ENCODE measurements at regions of chr9 and their contacts with region 1.

Region 1: DNA sequence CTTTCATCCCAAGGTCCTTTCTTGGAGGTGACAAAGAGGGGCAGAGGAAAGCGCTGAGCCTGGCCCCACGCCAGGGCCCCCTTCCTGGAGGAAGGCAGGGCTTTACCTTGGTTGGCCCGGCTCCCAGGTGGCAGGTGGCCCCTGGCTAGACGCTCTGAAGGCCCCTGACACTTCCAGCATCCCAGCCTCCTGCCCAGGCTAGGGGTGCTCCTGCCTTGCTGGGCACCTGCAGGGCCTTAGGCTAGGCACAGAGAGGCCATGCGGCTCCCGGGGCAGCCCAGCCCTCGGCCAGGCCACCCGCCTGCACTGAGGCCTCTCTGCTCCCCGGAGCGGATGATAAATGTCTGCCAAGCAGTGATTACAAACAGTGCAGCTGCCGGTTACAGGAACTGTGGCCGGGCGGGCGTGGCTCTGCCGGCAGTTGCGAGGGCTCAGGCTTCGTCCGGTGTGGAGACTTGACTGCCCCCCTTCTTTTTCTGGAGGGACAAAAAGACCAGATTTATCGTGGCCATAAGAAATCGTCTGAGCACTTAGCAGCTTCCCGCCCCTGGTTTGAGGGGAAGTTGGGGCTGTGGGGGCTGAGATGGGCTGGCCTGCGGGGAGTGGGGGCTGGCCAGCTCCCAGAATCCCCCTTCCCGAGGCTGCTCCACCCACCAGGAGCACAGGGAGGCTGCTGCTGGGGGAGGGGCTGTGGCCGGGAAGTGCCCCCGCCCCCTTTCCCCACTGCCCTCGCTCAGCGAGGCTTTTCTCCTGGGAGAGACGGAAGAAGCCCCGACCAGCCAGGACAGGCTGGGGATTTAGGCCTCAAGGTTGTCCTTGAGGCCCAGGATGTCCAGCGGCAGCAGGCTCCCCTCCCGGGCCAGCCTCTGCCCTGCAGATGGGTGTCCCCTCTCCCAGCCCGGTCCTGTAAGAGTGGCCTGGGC is 31.6 kb upstream of the UBAC1 start:
- DNase-seq: peak in 7 of 9 experiments; percentile 28 to 75 (median 49)
- ATAC-seq: no peak
- H3K4me3 ChIP-seq: peak overlapping the region; percentile 33
- H3K4me3 Mint-ChIP-seq: peak overlapping the region; percentile 26
- H3K27ac ChIP-seq: peak overlapping the region in 1 of 2 experiments; percentile 54
- H3K27ac Mint-ChIP-seq: no peak overlapping the region
- H3K4me1 ChIP-seq: peaks cover 27% of the 10 kb centered on the region
- H3K4me1 Mint-ChIP-seq: peaks cover 11% of the 10 kb centered on the region
- H3K27me3 ChIP-seq: no peaks in the 10 kb centered on the region
- H3K27me3 Mint-ChIP-seq: no peaks in the 10 kb centered on the region
- CTCF ChIP-seq: no peak

Region 2: DNA sequence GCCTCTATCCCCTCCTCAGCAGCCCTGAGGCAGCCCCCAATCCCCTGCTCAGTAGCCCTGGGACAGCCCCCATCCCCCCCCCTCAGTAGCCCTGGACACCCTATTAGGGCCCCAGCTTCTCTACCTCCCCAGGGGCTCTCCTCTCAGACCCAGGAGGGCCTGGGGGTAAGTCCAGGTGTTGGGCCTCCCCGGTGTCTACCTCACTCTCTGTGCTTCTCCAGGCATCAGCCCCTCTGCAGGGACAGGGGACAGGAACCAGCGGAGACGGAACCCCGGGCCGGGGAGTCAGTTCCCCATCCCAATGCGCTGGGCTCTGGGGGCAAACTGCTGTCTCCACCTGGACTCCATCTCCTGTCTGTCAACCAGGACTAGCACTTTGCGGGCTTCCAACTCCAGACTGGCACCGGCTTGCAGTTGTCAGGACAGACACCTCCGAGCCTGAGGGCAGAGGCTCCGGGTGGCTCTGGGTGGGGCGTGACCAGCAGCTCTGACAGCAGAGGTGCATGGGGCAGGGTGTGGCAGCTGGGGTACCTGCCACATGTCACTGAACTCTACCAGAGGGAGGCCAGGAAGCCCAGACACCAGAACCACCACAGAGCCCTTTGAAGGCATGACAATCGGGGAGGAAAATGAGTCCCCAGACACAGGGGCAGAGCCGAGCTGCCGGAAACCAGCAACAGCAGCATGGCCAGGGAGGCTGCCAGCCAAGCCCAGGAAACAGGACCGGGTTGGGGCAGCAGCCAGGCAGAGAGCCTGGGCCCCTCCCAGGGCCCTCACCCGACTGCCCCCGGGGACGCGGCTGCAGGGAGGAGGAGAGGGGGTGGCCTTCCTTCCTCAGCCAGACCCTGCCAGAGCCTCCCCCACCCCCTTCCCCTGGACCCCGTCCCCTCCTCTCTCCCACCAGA is 13.9 kb before region 1 on chr9:
- CTCF ChIA-PET with region 1: no interaction called
- POLR2A ChIA-PET with region 1: no interaction called
- intact Hi-C with region 1: loop called in 1 of 2 experiments (anchors 2 kb)
- DNase-seq: peak; percentile 46 to 83 (median 68)
- ATAC-seq: peak; percentile 94
- H3K4me3 ChIP-seq: peak overlapping the region in 1 of 2 experiments; percentile 14
- H3K4me3 Mint-ChIP-seq: peak overlapping the region; percentile 67
- H3K27ac ChIP-seq: no peak overlapping the region
- H3K27ac Mint-ChIP-seq: no peak overlapping the region
- H3K4me1 ChIP-seq: peaks cover 25% of the 10 kb centered on the region
- H3K4me1 Mint-ChIP-seq: peaks cover 14% of the 10 kb centered on the region
- H3K27me3 ChIP-seq: peaks cover 0 to 2% of the 10 kb centered on the region in 2 experiments
- H3K27me3 Mint-ChIP-seq: no peaks in the 10 kb centered on the region
- CTCF ChIP-seq: no peak

Region 3: GRCh38 chr9:136109351-136110081 is 116.8 kb after region 1 on chr9:
- CTCF ChIA-PET with region 1: no interaction called
- POLR2A ChIA-PET with region 1: no interaction called
- intact Hi-C with region 1: loop called in 1 of 2 experiments (anchors 5 kb)
- DNase-seq: peak; percentile 77 to 95 (median 92)
- ATAC-seq: peak; percentile 91
- H3K4me3 ChIP-seq: peak overlapping the region; percentile 58 to 65
- H3K4me3 Mint-ChIP-seq: peak overlapping the region; percentile 83
- H3K27ac ChIP-seq: peak overlapping the region; percentile 28 to 84
- H3K27ac Mint-ChIP-seq: peak overlapping the region; percentile 84
- H3K4me1 ChIP-seq: peaks cover 93% of the 10 kb centered on the region
- H3K4me1 Mint-ChIP-seq: peaks cover 73% of the 10 kb centered on the region
- H3K27me3 ChIP-seq: no peaks in the 10 kb centered on the region
- H3K27me3 Mint-ChIP-seq: no peaks in the 10 kb centered on the region
- CTCF ChIP-seq: no peak

Region 4: DNA sequence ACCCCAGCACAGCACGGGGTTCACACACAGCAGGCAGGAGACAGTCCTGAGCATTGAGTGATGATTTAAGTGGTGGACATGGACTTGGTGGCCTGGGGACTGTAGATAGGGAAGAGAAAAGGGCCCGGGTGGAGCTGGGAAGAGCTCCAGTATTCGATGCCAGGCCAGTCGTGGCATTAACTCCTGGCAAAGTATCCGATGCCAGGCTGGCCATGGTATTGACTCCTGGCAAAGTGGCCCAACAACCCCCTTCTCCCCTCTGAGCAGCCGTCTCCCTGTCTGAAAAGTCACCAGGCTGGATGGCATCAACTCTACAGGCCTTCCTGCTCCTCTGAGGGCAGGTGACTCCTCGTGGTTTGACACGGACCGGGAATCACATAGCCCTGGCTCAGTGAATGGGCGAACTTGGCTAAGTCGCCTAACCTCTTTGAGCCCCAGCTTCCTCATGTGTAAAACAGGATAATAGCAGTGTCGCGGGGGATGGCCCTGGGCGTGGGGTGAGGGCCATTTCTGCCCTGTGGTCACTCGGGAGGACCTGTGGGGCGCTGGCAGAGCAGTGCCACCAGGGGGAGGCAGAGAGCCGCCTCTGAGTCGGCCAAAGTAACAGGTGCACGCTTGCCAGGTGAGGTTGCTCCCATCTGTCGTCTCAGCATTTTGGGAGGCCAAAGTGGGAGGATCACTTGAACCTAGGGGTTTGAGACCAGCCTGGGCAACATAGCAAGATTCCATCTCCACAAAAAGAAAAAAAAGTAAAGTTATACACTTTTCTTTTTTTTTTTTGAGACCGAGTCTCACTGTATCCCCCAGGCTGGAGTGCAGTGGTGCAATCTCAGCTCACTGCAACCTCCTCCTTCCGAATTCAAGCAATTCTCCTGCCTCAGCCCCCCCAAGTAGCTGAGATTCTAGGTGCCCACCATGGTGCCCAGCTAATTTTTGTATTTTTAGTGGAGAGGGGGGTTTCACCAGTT is 495.8 kb after region 1 on chr9:
- CTCF ChIA-PET with region 1: no interaction called
- POLR2A ChIA-PET with region 1: no interaction called
- intact Hi-C with region 1: no loop called
- DNase-seq: peak; percentile 61 to 87 (median 78)
- ATAC-seq: peak; percentile 58
- H3K4me3 ChIP-seq: no peak overlapping the region
- H3K4me3 Mint-ChIP-seq: no peak overlapping the region
- H3K27ac ChIP-seq: no peak overlapping the region
- H3K27ac Mint-ChIP-seq: no peak overlapping the region
- H3K4me1 ChIP-seq: peaks cover 10% of the 10 kb centered on the region
- H3K4me1 Mint-ChIP-seq: peaks cover 6% of the 10 kb centered on the region
- H3K27me3 ChIP-seq: no peaks in the 10 kb centered on the region
- H3K27me3 Mint-ChIP-seq: no peaks in the 10 kb centered on the region
- CTCF ChIP-seq: peak; percentile 97